ENCODE measurements at regions of chr18 and their contacts with region 1.

Region 1: DNA sequence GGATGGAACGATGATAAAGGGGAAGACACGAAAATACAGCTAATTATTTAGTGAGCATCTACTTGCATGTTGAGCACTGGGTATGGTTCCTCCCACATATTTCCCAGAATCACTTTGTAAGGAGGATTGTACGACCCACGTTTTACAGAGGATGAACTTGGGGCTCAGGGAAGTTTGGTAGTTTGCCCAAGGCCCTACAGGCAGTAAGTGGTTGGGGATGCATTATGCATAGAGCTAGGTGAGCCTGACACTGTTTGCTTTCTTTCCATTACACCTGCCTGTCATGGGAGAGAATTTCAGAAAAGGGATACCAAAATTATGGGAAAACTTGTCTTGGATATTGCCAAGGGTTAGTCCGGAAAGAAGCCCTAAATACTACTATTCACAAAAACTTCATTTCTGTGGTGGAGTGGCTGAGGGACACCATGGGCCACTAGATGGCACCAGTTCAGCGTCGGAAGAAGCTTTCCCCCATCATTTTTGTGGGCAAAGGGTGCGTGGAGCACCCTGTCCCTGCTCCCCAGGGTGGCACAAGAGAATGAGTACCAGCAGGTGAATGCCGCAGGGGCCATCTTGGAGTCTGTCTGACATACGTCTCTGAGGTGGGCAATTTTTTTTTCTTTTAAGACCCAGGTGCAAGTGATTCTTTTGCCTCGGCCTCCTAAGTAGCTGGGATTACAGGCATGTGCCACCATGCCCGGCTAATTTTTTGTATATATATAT is 23.5 kb upstream of the C18orf32 start:
- DNase-seq: peak; percentile 69
- H3K4me3 ChIP-seq: no peak overlapping the region
- H3K27ac ChIP-seq: no peak overlapping the region
- H3K4me1 ChIP-seq: no peaks in the 10 kb centered on the region
- H3K27me3 ChIP-seq: no peaks in the 10 kb centered on the region
- CTCF ChIP-seq: peak; percentile 97
- EP300 ChIP-seq: no peak
- RAD21 ChIP-seq: peak; percentile 92

Region 2: GRCh38 chr18:49227441-49228165 is 283.0 kb before region 1 on chr18:
- CTCF ChIA-PET with region 1: no interaction called
- POLR2A ChIA-PET with region 1: no interaction called
- DNase-seq: no peak
- H3K4me3 ChIP-seq: no peak overlapping the region
- H3K27ac ChIP-seq: no peak overlapping the region
- H3K4me1 ChIP-seq: no peaks in the 10 kb centered on the region; a peak in 1 of 4 replicates
- H3K27me3 ChIP-seq: no peaks in the 10 kb centered on the region
- CTCF ChIP-seq: no peak
- EP300 ChIP-seq: no peak
- RAD21 ChIP-seq: no peak

Region 3: DNA sequence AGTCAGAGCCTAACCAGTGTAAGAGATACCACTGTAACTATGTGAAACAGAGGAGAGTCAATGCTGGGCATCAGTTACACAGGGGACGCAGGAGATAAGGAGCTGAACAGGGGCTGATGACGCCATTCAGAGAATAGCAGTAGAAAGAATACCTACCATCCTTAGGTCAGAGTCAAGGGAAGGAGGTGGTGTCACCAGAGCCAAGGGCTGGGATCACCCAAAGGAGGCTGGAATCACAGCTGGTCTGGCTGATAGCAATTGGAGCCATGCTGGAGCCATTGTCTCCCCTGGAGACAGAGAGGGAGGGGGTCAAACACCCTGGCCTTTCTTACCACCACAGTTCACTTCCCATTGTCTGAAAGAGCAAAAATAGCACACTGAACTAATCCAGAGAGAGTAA is 13.8 kb after region 1 on chr18:
- CTCF ChIA-PET with region 1: interaction called, 13 read pairs
- POLR2A ChIA-PET with region 1: no interaction called
- DNase-seq: no peak
- H3K4me3 ChIP-seq: no peak overlapping the region
- H3K27ac ChIP-seq: no peak overlapping the region
- H3K4me1 ChIP-seq: peaks cover 0 to 19% of the 10 kb centered on the region in 2 experiments; a peak in 1 of 4 replicates
- H3K27me3 ChIP-seq: no peaks in the 10 kb centered on the region
- CTCF ChIP-seq: no peak
- EP300 ChIP-seq: no peak
- RAD21 ChIP-seq: no peak

Region 4: DNA sequence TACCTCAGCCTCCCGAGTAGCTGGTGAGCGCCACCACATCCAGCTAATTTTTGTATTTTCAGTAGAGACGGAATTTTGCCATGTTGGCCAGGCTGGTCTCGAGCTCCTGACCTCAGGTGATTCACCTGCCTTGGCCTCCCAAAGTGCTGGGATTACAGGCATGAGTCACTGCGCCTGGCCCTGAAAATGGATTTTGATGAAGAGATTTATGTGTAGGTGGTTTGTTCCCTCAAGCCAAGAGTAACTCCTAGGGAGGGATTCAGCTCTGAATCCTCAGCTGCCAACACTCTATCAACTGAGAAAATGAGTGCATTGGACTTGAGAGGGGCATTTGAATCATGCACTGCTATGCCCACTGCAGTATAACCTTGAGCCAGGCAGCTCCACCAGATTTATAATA is 33.8 kb after region 1 on chr18:
- CTCF ChIA-PET with region 1: interaction called, 12 read pairs
- POLR2A ChIA-PET with region 1: no interaction called
- DNase-seq: no peak
- H3K4me3 ChIP-seq: no peak overlapping the region
- H3K27ac ChIP-seq: no peak overlapping the region
- H3K4me1 ChIP-seq: peaks cover 7 to 13% of the 10 kb centered on the region in 2 experiments; a peak in 2 of 4 replicates
- H3K27me3 ChIP-seq: no peaks in the 10 kb centered on the region
- CTCF ChIP-seq: no peak
- EP300 ChIP-seq: no peak
- RAD21 ChIP-seq: no peak

Region 5: GRCh38 chr18:49658823-49659404 is 148.4 kb after region 1 on chr18:
- CTCF ChIA-PET with region 1: no interaction called
- POLR2A ChIA-PET with region 1: no interaction called
- DNase-seq: no peak
- H3K4me3 ChIP-seq: no peak overlapping the region
- H3K27ac ChIP-seq: no peak overlapping the region
- H3K4me1 ChIP-seq: no peaks in the 10 kb centered on the region; a peak in 1 of 4 replicates
- H3K27me3 ChIP-seq: no peaks in the 10 kb centered on the region
- CTCF ChIP-seq: no peak
- EP300 ChIP-seq: no peak
- RAD21 ChIP-seq: no peak

Region 6: GRCh38 chr18:49677762-49678413 is 167.3 kb after region 1 on chr18:
- CTCF ChIA-PET with region 1: no interaction called
- POLR2A ChIA-PET with region 1: no interaction called
- DNase-seq: no peak
- H3K4me3 ChIP-seq: no peak overlapping the region
- H3K27ac ChIP-seq: no peak overlapping the region
- H3K4me1 ChIP-seq: no peaks in the 10 kb centered on the region; a peak in 1 of 4 replicates
- H3K27me3 ChIP-seq: no peaks in the 10 kb centered on the region; the same call in 1 of the 2 replicates
- CTCF ChIP-seq: no peak
- EP300 ChIP-seq: no peak
- RAD21 ChIP-seq: no peak

Region 7: GRCh38 chr18:49849331-49850217 is 339.0 kb after region 1 on chr18:
- CTCF ChIA-PET with region 1: interaction called, 254 read pairs
- POLR2A ChIA-PET with region 1: no interaction called
- DNase-seq: no peak
- H3K4me3 ChIP-seq: no peak overlapping the region
- H3K27ac ChIP-seq: peak overlapping the region in 1 of 2 experiments; percentile 40; a peak in 1 of 4 replicates
- H3K4me1 ChIP-seq: peaks cover 5 to 12% of the 10 kb centered on the region in 2 experiments; a peak in 3 of 4 replicates
- H3K27me3 ChIP-seq: no peaks in the 10 kb centered on the region
- CTCF ChIP-seq: no peak
- EP300 ChIP-seq: peak in 1 of 2 experiments; percentile 27; a peak in 1 of 4 replicates
- RAD21 ChIP-seq: no peak

Region 8: GRCh38 chr18:50203801-50204604 is 693.4 kb after region 1 on chr18:
- CTCF ChIA-PET with region 1: interaction called, 37 read pairs
- POLR2A ChIA-PET with region 1: no interaction called
- DNase-seq: peak; percentile 68
- H3K4me3 ChIP-seq: no peak overlapping the region; a peak in 1 of 4 replicates
- H3K27ac ChIP-seq: no peak overlapping the region
- H3K4me1 ChIP-seq: peaks cover 0 to 2% of the 10 kb centered on the region in 2 experiments; a peak in 1 of 4 replicates
- H3K27me3 ChIP-seq: no peaks in the 10 kb centered on the region; the same call in 1 of the 2 replicates
- CTCF ChIP-seq: peak; percentile 66
- EP300 ChIP-seq: no peak
- RAD21 ChIP-seq: peak; percentile 79

Measured in SK-N-SH (cell line).